Dorsolateral prefrontal cortex (tissue), 120 donors: ENCODE measurements at regions of chr7 and their contacts with region 1.

Region 1: DNA sequence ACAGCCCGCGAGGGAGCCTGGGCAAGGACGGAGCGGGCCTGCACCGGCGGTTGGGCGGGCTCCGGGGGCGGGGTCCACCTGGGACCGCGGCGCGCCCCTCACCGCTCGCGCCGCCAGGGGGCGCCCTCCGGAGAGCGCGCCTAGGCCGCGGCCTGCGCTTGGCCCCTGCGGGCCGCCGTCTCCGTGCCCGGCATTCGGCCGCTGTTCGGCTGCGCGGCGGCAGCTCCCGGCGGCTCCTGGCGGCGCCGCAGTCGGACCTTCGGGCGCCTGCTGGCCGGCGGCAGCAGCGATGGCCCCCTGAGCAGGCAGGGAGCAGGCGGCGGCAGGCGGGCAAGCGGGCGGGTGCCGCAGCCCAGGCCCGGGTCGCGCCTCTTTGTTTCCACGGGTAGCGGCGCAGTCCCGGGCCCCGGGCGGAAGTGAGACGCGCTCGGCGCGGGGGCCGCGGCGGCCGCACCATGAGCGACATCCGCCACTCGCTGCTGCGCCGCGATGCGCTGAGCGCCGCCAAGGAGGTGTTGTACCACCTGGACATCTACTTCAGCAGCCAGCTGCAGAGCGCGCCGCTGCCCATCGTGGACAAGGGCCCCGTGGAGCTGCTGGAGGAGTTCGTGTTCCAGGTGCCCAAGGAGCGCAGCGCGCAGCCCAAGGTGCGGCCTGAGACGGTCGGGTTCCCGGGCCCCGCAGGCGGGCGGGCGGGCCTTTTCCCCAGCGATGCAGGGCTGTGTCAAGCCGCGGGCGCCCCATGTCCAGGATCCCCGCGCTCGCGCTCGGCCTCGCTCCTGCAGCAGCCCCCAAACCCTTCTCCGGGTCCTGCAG is at the start of gene INTS15:
- DNase-seq: peak; percentile 43 to 84 (median 62)
- H3K4me3 ChIP-seq: peak within 1 kb of the TSS; percentile 66 to 98 (median 91)
- H3K27ac ChIP-seq: peak within 1 kb of the TSS in 57 of 59 donors; percentile 18 to 93 (median 82)
- H3K27me3 ChIP-seq: no peaks in the 10 kb centered on the region
- CTCF ChIP-seq: peak in 55 of 56 donors; percentile 34 to 96 (median 74)
- total RNA-seq, gene INTS15: 24.0 to 46.8 (median 35.2) TPM

Region 2: GRCh38 chr7:6516387-6516983 is 73.6 kb before region 1 on chr7:
- intact Hi-C with region 1: loop called in 1 of 2 experiments (anchors 2 kb)
- DNase-seq: peak; percentile 66 to 90 (median 85)
- H3K4me3 ChIP-seq: peak overlapping the region in 57 of 59 donors; percentile 11 to 64 (median 43)
- H3K27ac ChIP-seq: peak overlapping the region in 21 of 59 donors; percentile 7 to 71 (median 43)
- H3K27me3 ChIP-seq: peaks cover 0 to 3% (median 0%) of the 10 kb centered on the region in 45 donors
- CTCF ChIP-seq: peak; percentile 57 to 93 (median 84)

Region 3: GRCh38 chr7:6729492-6730342 is 139.7 kb after region 1 on chr7:
- intact Hi-C with region 1: loop called in 1 of 2 experiments (anchors 5 kb)
- DNase-seq: peak; percentile 83 to 95 (median 92)
- H3K4me3 ChIP-seq: peak overlapping the region; percentile 66 to 99 (median 94)
- H3K27ac ChIP-seq: peak overlapping the region in 54 of 59 donors; percentile 1 to 94 (median 72)
- H3K27me3 ChIP-seq: no peaks in the 10 kb centered on the region
- CTCF ChIP-seq: peak in 53 of 56 donors; percentile 12 to 65 (median 43)

Region 4: GRCh38 chr7:6889252-6889812 is 299.3 kb after region 1 on chr7:
- intact Hi-C with region 1: no loop called
- DNase-seq: no peak
- H3K4me3 ChIP-seq: no peak overlapping the region
- H3K27ac ChIP-seq: no peak overlapping the region
- H3K27me3 ChIP-seq: no peaks in the 10 kb centered on the region
- CTCF ChIP-seq: no peak